ENCODE measurements at regions of chr1 and their contacts with region 1.

Region 1: GRCh38 chr1:72724951-72725861 is 442.9 kb upstream of the NEGR1 start:
- DNase-seq: no peak
- H3K4me3 ChIP-seq: no peak overlapping the region
- H3K27ac ChIP-seq: no peak overlapping the region
- H3K4me1 ChIP-seq: no peaks in the 10 kb centered on the region
- H3K27me3 ChIP-seq: no peaks in the 10 kb centered on the region
- CTCF ChIP-seq: no peak

Region 2: GRCh38 chr1:72705921-72706320 is 19.3 kb before region 1 on chr1:
- CTCF ChIA-PET with region 1: no interaction called
- POLR2A ChIA-PET with region 1: interaction called, 22 read pairs
- intact Hi-C with region 1: no loop called
- DNase-seq: no peak
- H3K4me3 ChIP-seq: no peak overlapping the region
- H3K27ac ChIP-seq: no peak overlapping the region
- H3K4me1 ChIP-seq: no peaks in the 10 kb centered on the region
- H3K27me3 ChIP-seq: no peaks in the 10 kb centered on the region
- CTCF ChIP-seq: no peak